Ascending aorta (tissue), 2 donors: ENCODE measurements at regions of chr7 and their contacts with region 1.

Region 1: GRCh38 chr7:92447345-92448204 is at the start of gene GATAD1:
- DNase-seq: peak; percentile 62 to 93
- H3K4me3 ChIP-seq: peak within 1 kb of the TSS; percentile 92 to 98
- H3K27ac ChIP-seq: peak within 1 kb of the TSS; percentile 95 to 97
- H3K4me1 ChIP-seq: no peaks in the 10 kb centered on the region
- H3K27me3 ChIP-seq: no peaks in the 10 kb centered on the region
- CTCF ChIP-seq: peak; percentile 91 to 96 (median 92)
- total RNA-seq, gene GATAD1: 20.4 TPM

Region 2: DNA sequence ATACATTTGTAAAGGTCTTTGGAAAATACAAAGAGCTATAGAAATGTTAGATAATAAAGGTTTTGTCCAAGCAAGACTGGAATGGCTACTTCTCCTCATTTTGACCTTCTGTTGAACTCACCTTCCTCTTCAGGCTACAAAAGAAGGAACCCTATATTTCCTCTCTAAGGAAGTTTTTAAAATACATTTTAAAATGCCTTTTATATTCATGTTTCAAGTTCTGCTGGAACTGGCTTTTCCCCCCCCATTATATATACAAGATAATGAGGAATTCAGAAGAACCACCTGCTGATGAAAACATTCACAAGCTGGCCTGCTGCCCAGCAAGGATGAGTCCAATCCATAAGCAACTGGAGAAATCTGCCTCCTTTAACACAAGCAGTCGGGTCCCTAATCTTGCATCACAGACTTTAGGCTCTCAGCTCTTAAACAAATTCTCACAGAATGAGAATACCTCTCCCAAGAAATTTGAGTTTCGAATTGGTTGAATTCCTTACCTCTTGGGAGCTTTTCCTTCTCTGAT is 611.7 kb before region 1 on chr7:
- intact Hi-C with region 1: loop called (anchors 10 kb)
- DNase-seq: no peak
- H3K4me3 ChIP-seq: no peak overlapping the region
- H3K27ac ChIP-seq: no peak overlapping the region
- H3K4me1 ChIP-seq: no peaks in the 10 kb centered on the region
- H3K27me3 ChIP-seq: no peaks in the 10 kb centered on the region
- CTCF ChIP-seq: no peak

Region 3: GRCh38 chr7:92178927-92179924 is 268.3 kb before region 1 on chr7 and contains the start of gene LRRD1:
- intact Hi-C with region 1: loop called (anchors 2 kb)
- DNase-seq: peak; percentile 46 to 92
- H3K4me3 ChIP-seq: peak within 1 kb of the TSS; percentile 55 to 68
- H3K27ac ChIP-seq: peak within 1 kb of the TSS; percentile 72 to 73
- H3K4me1 ChIP-seq: peaks cover 0 to 4% of the 10 kb centered on the region in 2 donors
- H3K27me3 ChIP-seq: no peaks in the 10 kb centered on the region
- CTCF ChIP-seq: peak; percentile 80 to 98 (median 96)
- total RNA-seq, gene LRRD1: not detected

Region 4: DNA sequence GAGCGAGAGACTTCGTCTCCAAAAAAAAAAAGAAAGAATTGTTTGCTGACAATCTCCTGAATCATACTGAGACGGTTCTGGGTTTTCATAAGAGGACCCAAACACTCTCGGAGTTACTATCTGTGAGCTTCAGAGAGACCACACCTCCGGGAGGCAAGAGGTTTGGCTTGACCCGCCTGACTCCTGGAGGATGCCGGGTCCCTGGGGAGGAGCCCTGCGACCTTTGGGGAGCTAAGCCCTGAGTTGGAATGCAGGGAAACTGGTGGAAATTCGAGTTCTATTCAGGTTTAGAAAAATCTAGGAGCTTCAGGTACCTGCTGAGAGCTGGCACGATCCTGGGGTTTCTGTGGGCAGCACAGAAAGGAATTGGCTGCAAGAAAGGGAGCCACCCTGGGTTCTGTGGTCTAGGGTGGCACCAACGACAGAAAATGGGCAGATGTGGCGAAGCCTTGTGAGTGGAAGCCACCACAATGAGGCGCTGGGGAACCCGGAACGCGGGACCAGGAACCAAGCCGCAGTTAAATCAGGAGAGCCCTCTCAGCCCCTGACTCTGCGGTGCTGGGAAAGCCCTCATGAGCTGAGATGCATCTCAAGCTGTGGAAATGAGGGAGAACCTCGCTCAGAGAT is 22.1 kb before region 1 on chr7:
- intact Hi-C with region 1: loop called (anchors 1 kb)
- DNase-seq: no peak
- H3K4me3 ChIP-seq: peak overlapping the region in 1 of 2 donors; percentile 69
- H3K27ac ChIP-seq: no peak overlapping the region
- H3K4me1 ChIP-seq: no peaks in the 10 kb centered on the region
- H3K27me3 ChIP-seq: no peaks in the 10 kb centered on the region
- CTCF ChIP-seq: no peak

Region 5: GRCh38 chr7:92590711-92591310 is 143.2 kb after region 1 on chr7:
- intact Hi-C with region 1: loop called (anchors 5 kb)
- DNase-seq: no peak
- H3K4me3 ChIP-seq: peak overlapping the region; percentile 84 to 92
- H3K27ac ChIP-seq: no peak overlapping the region
- H3K4me1 ChIP-seq: peaks cover 0 to 20% of the 10 kb centered on the region in 2 donors
- H3K27me3 ChIP-seq: no peaks in the 10 kb centered on the region
- CTCF ChIP-seq: no peak